ENCODE measurements at regions of chr2 and their contacts with region 1.

Region 1: GRCh38 chr2:135876066-135876711 is at the start of gene MCM6:
- DNase-seq: peak; percentile 94
- ATAC-seq: peak; percentile 91
- H3K4me3 ChIP-seq: peak within 1 kb of the TSS; percentile 95
- H3K27ac ChIP-seq: peak within 1 kb of the TSS; percentile 86
- H3K4me1 ChIP-seq: peaks cover 4% of the 10 kb centered on the region; the same call in 1 of the 2 replicates
- H3K27me3 ChIP-seq: no peaks in the 10 kb centered on the region
- CTCF ChIP-seq: no peak
- EP300 ChIP-seq: no peak
- POLR2A ChIP-seq: peak; percentile 51; the same call in 1 of the 2 replicates
- RAD21 ChIP-seq: no peak
- polyA plus RNA-seq, gene MCM6: 37.4 to 74.4 TPM

Region 2: DNA sequence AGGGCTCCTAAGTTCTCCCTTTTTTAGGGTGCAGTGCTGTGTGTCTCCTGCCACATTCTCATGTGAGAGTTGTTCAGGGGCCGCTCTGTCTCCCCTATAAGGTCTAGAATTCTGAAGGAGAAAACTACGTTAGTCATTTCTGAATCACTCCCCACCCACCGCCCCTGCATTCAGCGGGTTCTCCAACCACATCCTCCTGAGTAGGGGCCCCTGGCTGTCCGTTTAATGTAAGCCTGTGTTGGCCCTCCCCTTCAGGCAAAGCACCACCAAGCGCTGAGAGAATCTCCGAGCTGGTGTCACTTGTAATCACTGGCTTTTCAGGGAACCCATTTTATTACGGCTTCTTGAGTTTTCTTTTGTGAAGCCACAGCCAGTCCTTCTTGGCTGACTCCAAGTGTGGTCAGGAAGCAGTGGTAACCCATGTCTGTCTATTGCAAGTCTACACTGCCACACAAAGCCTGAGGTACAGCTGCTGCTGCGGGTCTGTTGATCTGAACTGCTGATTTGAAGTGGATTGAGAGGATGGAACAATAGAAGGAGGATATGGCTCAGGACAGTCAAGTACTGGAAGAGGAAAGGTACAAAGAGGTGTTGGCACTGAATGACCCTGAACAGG is 56.1 kb before region 1 on chr2:
- CTCF ChIA-PET with region 1: no interaction called
- POLR2A ChIA-PET with region 1: interaction called, 4 read pairs
- RAD21 ChIA-PET with region 1: no interaction called
- SMC1A ChIA-PET with region 1: interaction called, 4 read pairs
- in situ Hi-C with region 1: no loop called
- intact Hi-C with region 1: loop called (anchors 1 kb)
- DNase-seq: peak; percentile 48
- ATAC-seq: peak; percentile 91
- H3K4me3 ChIP-seq: peak overlapping the region; percentile 63
- H3K27ac ChIP-seq: peak overlapping the region; percentile 93
- H3K4me1 ChIP-seq: peaks cover 37% of the 10 kb centered on the region
- H3K27me3 ChIP-seq: no peaks in the 10 kb centered on the region
- CTCF ChIP-seq: no peak
- EP300 ChIP-seq: 0 out of 4 replicates have a peak, but pooled peaks of 1 of the 2 experiments have one; percentile 18
- POLR2A ChIP-seq: peak; percentile 67
- RAD21 ChIP-seq: 0 out of 2 replicates have a peak, but pooled peaks have one; percentile 18

Region 3: GRCh38 chr2:136171221-136171620 is 295.0 kb after region 1 on chr2:
- CTCF ChIA-PET with region 1: no interaction called
- POLR2A ChIA-PET with region 1: no interaction called
- RAD21 ChIA-PET with region 1: no interaction called
- SMC1A ChIA-PET with region 1: no interaction called
- in situ Hi-C with region 1: no loop called
- intact Hi-C with region 1: no loop called
- DNase-seq: no peak
- ATAC-seq: peak; percentile 73
- H3K4me3 ChIP-seq: no peak overlapping the region
- H3K27ac ChIP-seq: no peak overlapping the region
- H3K4me1 ChIP-seq: no peaks in the 10 kb centered on the region
- H3K27me3 ChIP-seq: peaks cover 0 to 8% of the 10 kb centered on the region in 2 experiments; a peak in 2 of 4 replicates
- CTCF ChIP-seq: peak in 2 of 3 experiments; percentile 25 to 36; a peak in 3 of 6 replicates
- EP300 ChIP-seq: no peak
- POLR2A ChIP-seq: no peak
- RAD21 ChIP-seq: peak; percentile 60

Region 4: GRCh38 chr2:136185981-136186776 is 310.0 kb after region 1 on chr2:
- CTCF ChIA-PET with region 1: no interaction called
- POLR2A ChIA-PET with region 1: no interaction called
- RAD21 ChIA-PET with region 1: no interaction called
- SMC1A ChIA-PET with region 1: no interaction called
- in situ Hi-C with region 1: no loop called
- intact Hi-C with region 1: no loop called
- DNase-seq: no peak
- ATAC-seq: no peak
- H3K4me3 ChIP-seq: no peak overlapping the region
- H3K27ac ChIP-seq: no peak overlapping the region
- H3K4me1 ChIP-seq: no peaks in the 10 kb centered on the region
- H3K27me3 ChIP-seq: no peaks in the 10 kb centered on the region; a peak in 2 of 4 replicates
- CTCF ChIP-seq: no peak
- EP300 ChIP-seq: no peak
- POLR2A ChIP-seq: no peak
- RAD21 ChIP-seq: no peak

Measured in GM12878 (cell line).